ENCODE measurements at regions of chr10 and their contacts with region 1.

Region 1: DNA sequence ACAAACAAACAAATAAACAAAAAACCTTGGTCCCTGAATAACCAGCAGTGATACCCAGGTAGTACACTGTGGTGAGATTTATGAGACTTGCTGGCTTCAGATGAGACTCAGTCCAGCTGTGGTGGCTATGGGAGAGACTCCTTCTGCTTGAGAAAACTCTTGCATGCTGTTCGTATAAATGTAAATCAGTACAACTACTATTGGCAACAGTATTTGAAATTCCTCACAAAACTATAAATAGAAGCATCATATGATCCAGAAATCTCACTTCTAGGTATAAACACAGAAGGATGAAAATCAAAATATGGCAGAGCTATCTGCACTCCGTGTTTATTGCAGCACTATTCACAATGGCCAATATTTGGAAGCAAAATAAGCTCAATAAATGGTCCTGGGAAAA is 692.1 kb downstream of the PCDH15 start:
- DNase-seq: no peak
- ATAC-seq: no peak
- H3K4me3 ChIP-seq: no peak overlapping the region
- H3K27ac ChIP-seq: no peak overlapping the region
- H3K4me1 ChIP-seq: no peaks in the 10 kb centered on the region
- H3K27me3 ChIP-seq: no peaks in the 10 kb centered on the region
- CTCF ChIP-seq: no peak

Region 2: DNA sequence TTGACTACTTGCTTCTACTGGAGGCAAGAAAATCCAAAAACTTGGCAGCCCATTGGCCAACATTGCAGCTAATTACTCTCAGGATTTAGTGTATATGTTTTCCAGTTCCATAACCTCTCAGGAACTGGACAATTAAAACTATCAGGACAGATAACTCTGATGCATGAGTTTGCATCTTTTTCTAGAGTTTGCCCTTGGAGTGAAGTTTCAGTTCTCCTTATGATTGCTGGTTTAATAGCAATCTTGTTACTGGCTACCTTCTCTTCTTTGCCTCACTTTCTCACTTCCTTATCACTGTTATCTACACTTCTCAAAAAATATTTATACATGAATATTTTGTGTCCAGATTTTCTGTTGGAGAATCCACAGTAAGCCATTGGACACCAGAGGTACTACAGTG is 43.9 kb before region 1 on chr10:
- intact Hi-C with region 1: no loop called
- DNase-seq: no peak
- ATAC-seq: no peak
- H3K4me3 ChIP-seq: no peak overlapping the region
- H3K27ac ChIP-seq: no peak overlapping the region
- H3K4me1 ChIP-seq: no peaks in the 10 kb centered on the region
- H3K27me3 ChIP-seq: no peaks in the 10 kb centered on the region
- CTCF ChIP-seq: no peak

Region 3: DNA sequence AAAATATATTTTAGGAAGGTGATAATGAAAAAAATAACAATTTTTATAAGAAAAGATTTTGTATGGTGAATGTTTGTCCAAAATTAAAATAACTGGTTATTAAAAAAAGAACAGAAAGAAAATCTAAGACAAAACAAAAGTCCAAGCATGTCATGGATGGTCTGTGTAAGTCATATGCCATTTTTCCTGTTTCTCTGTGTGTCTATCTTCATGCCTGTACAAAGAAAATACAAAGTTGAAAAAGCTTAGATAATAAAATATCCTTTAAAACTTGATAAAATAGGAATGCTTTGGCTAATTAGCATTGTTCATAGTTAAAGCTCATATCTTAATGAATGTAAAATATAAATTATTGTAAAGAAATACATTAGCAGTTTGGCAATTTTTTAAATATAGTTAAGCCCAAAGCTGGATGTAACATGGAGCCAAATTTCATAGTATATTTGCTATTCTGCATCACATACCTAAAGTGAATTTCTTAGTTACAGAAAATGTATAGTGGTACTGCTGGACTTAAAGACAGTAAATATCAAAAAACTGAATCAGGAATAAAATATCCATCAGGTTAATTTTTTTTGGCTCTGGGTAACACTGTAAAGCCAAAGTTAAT is 31.0 kb after region 1 on chr10:
- intact Hi-C with region 1: loop called in 1 of 2 experiments (anchors 2 kb)
- DNase-seq: no peak
- ATAC-seq: no peak
- H3K4me3 ChIP-seq: no peak overlapping the region
- H3K27ac ChIP-seq: no peak overlapping the region
- H3K4me1 ChIP-seq: no peaks in the 10 kb centered on the region
- H3K27me3 ChIP-seq: no peaks in the 10 kb centered on the region
- CTCF ChIP-seq: no peak

Region 4: GRCh38 chr10:54758791-54759190 is 649.8 kb after region 1 on chr10:
- intact Hi-C with region 1: no loop called
- DNase-seq: no peak
- ATAC-seq: no peak
- H3K4me3 ChIP-seq: no peak overlapping the region
- H3K27ac ChIP-seq: no peak overlapping the region
- H3K4me1 ChIP-seq: no peaks in the 10 kb centered on the region
- H3K27me3 ChIP-seq: no peaks in the 10 kb centered on the region
- CTCF ChIP-seq: no peak

Measured in psoas muscle (tissue), 8 donors.